ENCODE measurements at regions of chr22 and their contacts with region 1.

Region 1: GRCh38 chr22:24133187-24133965 is 47.9 kb upstream of the SUSD2 start:
- DNase-seq: no peak
- H3K4me3 ChIP-seq: no peak overlapping the region
- H3K27ac ChIP-seq: no peak overlapping the region
- H3K4me1 ChIP-seq: no peaks in the 10 kb centered on the region; a peak in 1 of 7 replicates
- H3K27me3 ChIP-seq: no peaks in the 10 kb centered on the region
- CTCF ChIP-seq: peak; percentile 59 to 79 (median 62)
- EP300 ChIP-seq: no peak
- POLR2A ChIP-seq: no peak
- RAD21 ChIP-seq: peak; percentile 64 to 76

Region 2: GRCh38 chr22:24146194-24146616 is 12.8 kb after region 1 on chr22:
- CTCF ChIA-PET with region 1: interaction called, 102 read pairs
- POLR2A ChIA-PET with region 1: no interaction called
- DNase-seq: peak in 1 of 2 experiments; percentile 65
- H3K4me3 ChIP-seq: no peak overlapping the region
- H3K27ac ChIP-seq: no peak overlapping the region
- H3K4me1 ChIP-seq: peaks cover 5 to 19% (median 11%) of the 10 kb centered on the region in 4 experiments
- H3K27me3 ChIP-seq: no peaks in the 10 kb centered on the region
- CTCF ChIP-seq: no peak
- EP300 ChIP-seq: no peak
- POLR2A ChIP-seq: no peak
- RAD21 ChIP-seq: no peak

Region 3: DNA sequence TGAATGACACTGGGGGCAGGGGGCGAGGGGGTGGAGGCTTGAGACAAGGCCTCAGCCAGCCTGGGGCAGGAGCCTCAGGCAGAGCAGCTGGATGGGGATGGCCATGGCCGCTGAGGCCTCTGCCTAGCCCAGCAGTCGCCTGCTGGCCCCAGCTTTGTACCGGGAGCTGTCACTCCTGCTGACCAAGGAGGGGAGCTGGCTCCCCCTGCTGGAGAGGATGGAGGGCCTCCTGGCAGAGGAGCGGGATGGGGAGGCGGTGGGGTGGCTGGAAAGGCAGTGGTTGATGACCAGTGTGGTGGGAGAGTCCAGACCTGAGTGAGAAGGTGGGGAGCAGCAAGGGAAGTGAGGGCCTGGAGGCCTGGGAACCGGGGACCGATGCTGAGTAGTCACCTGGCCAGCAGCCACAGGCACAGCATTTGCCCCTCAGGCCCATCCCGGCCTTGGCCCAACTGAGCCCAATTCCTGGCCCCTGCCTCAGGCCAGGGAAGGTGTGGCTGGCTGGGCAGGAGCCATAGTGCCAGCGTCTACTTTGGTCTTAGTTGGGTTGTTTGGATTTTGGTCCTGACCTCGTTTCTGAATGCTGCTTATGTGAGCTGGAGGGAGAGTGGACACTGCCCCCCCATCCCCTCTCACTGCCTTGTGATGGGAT is 41.9 kb after region 1 on chr22:
- CTCF ChIA-PET with region 1: interaction called, 93 read pairs
- POLR2A ChIA-PET with region 1: interaction called, 5 read pairs
- DNase-seq: peak; percentile 46 to 94
- H3K4me3 ChIP-seq: no peak overlapping the region
- H3K27ac ChIP-seq: no peak overlapping the region
- H3K4me1 ChIP-seq: no peaks in the 10 kb centered on the region; a peak in 1 of 7 replicates
- H3K27me3 ChIP-seq: no peaks in the 10 kb centered on the region
- CTCF ChIP-seq: peak; percentile 94 to 97 (median 94)
- EP300 ChIP-seq: peak in 1 of 2 experiments; percentile 13; a peak in 1 of 3 replicates
- POLR2A ChIP-seq: no peak
- RAD21 ChIP-seq: peak; percentile 84 to 92

Measured in H1 (cell line).